ENCODE measurements at regions of chr12 and their contacts with region 1.

Region 1: GRCh38 chr12:49088190-49088931 is 6.2 kb downstream of the DHH start:
- DNase-seq: peak; percentile 78
- ATAC-seq: peak; percentile 95

Region 2: GRCh38 chr12:48917857-48918537 is 170.4 kb before region 1 on chr12:
- intact Hi-C with region 1: no loop called
- DNase-seq: no peak
- ATAC-seq: no peak

Region 3: GRCh38 chr12:48929551-48929950 is 158.8 kb before region 1 on chr12:
- intact Hi-C with region 1: no loop called
- DNase-seq: no peak
- ATAC-seq: no peak

Region 4: DNA sequence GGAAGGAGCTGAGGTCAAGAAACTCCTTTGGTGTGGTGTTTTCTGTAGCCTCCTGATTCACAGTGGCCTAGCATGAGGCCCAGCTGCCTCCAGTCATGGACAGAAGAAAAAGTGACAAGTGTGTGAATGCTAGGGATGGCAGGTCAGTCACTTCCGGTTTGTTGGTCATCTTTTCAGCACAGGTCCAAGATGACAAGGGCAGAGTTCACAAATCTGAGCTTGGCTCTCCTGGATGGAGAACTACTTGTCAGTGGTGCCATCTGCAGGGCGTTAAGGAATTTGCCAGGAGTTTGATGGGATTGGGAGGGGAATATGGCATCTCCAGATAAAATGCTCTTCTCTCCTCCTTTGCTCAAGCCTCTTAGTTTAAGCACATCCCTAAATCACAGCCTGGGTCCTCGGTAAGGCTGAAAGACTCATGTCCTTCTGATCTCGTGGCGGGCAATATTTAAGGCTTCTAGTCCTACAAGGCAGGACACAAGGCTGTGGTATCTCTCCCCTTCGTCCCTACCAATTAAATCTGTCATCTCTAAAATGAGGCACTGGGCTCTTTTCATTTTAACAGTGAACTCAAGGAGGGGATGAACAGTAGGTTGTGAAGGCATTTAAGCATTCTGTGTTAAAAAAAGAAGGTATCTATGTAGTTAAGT is 32.8 kb after region 1 on chr12:
- intact Hi-C with region 1: loop called (anchors 1 kb)
- DNase-seq: no peak
- ATAC-seq: peak; percentile 54

Region 5: GRCh38 chr12:49244176-49244575 is 155.8 kb after region 1 on chr12:
- intact Hi-C with region 1: loop called (anchors 1 kb)
- DNase-seq: no peak
- ATAC-seq: no peak